Activated CD4-positive, alpha-beta memory T cell treated with anti-CD3 and anti-CD28 coated beads for 36 hours (primary cell): ENCODE measurements at regions of chr4 and their contacts with region 1.

Region 1: GRCh38 chr4:78938868-78939666 is at the start of gene PAQR3:
- DNase-seq: peak; percentile 85
- H3K4me3 Mint-ChIP-seq: peak within 1 kb of the TSS; percentile 95
- H3K27ac Mint-ChIP-seq: no peak within 1 kb of the TSS
- H3K4me1 Mint-ChIP-seq: peaks cover 36% of the 10 kb centered on the region
- H3K27me3 Mint-ChIP-seq: peaks cover 12% of the 10 kb centered on the region
- total RNA-seq, gene PAQR3: 6.9 to 10.2 TPM

Region 2: GRCh38 chr4:78720994-78721677 is 217.9 kb before region 1 on chr4:
- CTCF ChIA-PET with region 1: no interaction called
- POLR2A ChIA-PET with region 1: no interaction called
- intact Hi-C with region 1: loop called (anchors 1 kb)
- DNase-seq: peak; percentile 57
- H3K4me3 Mint-ChIP-seq: peak overlapping the region; percentile 14
- H3K27ac Mint-ChIP-seq: peak overlapping the region; percentile 21
- H3K4me1 Mint-ChIP-seq: peaks cover 16% of the 10 kb centered on the region
- H3K27me3 Mint-ChIP-seq: no peaks in the 10 kb centered on the region

Region 3: DNA sequence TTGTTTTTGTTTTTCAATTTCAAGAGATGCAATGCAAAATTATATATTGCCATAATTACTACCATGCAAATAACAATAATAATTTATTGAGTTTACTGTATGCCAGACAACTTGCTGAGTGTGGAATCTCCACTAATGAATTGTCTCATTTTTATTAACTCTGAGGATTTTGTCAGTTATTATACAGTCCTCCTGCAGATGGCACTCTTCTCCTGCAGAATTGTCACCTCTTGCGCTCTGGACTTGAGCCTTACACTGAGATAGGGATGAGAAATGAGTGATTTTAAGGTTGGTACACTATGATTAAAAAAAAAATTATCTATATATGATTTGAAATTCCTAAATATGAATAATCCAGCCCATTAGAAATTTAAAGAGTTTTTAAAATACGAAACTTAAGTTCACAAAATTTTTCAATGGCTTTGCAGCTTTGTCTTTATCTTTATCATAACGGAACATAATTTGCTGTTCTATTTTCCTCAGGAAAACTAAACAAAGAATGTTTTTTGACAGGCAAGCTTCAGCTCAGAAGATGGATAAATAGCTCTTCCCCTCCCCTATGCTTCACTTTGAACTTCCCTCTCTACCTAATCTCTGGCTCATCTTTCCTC is 12.9 kb after region 1 on chr4:
- CTCF ChIA-PET with region 1: interaction called, 11 read pairs
- POLR2A ChIA-PET with region 1: no interaction called
- intact Hi-C with region 1: no loop called
- DNase-seq: peak; percentile 38
- H3K4me3 Mint-ChIP-seq: no peak overlapping the region
- H3K27ac Mint-ChIP-seq: no peak overlapping the region
- H3K4me1 Mint-ChIP-seq: peaks cover 2% of the 10 kb centered on the region
- H3K27me3 Mint-ChIP-seq: peaks cover 21% of the 10 kb centered on the region

Region 4: DNA sequence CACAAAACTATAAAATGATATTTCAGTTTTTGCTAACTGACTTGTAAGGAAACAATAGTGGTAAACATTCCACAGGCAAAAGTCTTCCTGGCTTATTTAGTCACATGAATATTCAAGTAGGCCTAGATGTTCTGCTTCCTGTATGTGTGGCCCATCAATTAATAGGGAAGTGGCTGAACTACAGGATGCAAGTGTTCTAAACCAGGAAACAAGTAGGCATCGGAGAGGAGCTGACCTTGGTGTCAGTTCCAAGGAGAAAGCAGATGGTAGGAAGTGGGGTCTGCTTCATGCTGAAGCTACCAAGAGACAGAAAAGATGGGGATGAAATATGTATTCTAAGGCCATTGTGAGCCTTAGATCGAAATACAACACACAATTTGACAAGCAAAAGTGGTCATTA is 984.2 kb after region 1 on chr4:
- CTCF ChIA-PET with region 1: no interaction called
- POLR2A ChIA-PET with region 1: no interaction called
- intact Hi-C with region 1: loop called (anchors 10 kb)
- DNase-seq: no peak
- H3K4me3 Mint-ChIP-seq: no peak overlapping the region
- H3K27ac Mint-ChIP-seq: no peak overlapping the region
- H3K4me1 Mint-ChIP-seq: peaks cover 11% of the 10 kb centered on the region
- H3K27me3 Mint-ChIP-seq: no peaks in the 10 kb centered on the region

Region 5: DNA sequence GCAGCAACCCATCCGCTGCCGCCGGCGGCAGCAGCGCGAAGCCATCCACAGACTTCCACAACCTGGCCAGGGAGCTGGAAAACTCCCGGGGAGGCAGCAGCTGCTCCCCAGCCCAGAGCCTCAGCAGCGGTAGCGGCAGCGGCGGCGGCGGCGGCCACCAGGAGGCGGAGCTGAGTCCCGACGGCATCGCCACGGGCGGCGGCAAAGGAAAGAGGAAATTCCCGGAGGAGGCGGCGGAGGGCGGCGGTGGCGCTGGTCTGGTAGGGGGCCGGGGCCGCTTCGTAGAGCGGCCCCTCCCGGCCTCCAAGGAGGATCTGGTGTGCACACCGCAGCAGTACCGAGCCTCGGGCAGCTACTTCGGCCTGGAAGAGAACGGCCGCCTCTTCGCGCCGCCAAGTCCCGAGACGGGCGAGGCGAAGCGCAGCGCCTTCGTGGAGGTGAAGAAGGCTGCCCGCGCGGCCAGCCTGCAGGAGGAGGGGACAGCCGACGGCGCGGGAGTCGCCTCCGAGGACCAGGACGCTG is 1263.2 kb after region 1 on chr4:
- CTCF ChIA-PET with region 1: interaction called, 6 read pairs
- POLR2A ChIA-PET with region 1: no interaction called
- intact Hi-C with region 1: loop called (anchors 5 kb)
- DNase-seq: peak; percentile 86
- H3K4me3 Mint-ChIP-seq: peak overlapping the region; percentile 73
- H3K27ac Mint-ChIP-seq: peak overlapping the region; percentile 78
- H3K4me1 Mint-ChIP-seq: peaks cover 22% of the 10 kb centered on the region
- H3K27me3 Mint-ChIP-seq: peaks cover 6% of the 10 kb centered on the region